Aorta (tissue), 5 donors: ENCODE measurements at regions of chr3 and their contacts with region 1.

Region 1: GRCh38 chr3:94004301-94004910 is 24.0 kb downstream of the STX19 start:
- DNase-seq: no peak
- ATAC-seq: peak; percentile 82
- H3K4me3 ChIP-seq: peak overlapping the region in 1 of 2 donors; percentile 48
- H3K27ac ChIP-seq: no peak overlapping the region
- H3K4me1 ChIP-seq: peaks cover 0 to 2% of the 10 kb centered on the region in 2 donors
- H3K27me3 ChIP-seq: no peaks in the 10 kb centered on the region

Region 2: DNA sequence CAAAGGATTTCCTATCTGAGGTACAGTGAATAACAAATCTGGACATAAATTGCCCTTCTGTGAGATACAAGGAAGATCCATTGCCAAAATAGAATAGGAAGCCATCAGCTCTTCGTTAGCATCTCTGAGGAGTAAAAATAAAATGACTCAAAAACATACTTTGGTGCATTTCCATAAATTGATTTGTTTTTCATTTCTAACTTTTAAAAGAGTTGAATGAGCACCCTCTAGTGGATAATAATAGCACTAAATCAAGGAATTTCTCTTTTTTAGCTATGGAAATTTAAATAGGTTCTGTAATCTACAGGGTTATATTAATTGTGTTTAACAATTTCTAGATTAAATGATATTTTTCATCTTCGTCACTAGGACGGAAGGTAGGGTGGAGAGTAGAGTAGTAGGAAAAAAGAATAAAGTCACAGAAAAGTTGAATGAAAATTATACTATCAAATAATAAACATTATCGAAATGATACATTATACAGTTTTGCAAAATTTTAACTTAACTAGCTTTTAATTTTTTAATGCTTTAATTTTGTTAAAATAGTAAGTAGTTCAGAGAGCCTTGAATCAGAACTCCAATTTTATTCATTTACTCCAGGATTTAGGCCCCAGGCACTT is 64.9 kb after region 1 on chr3:
- intact Hi-C with region 1: loop called (anchors 5 kb)
- DNase-seq: no peak
- ATAC-seq: peak; percentile 62
- H3K4me3 ChIP-seq: no peak overlapping the region
- H3K27ac ChIP-seq: no peak overlapping the region
- H3K4me1 ChIP-seq: peaks cover 0 to 3% of the 10 kb centered on the region in 2 donors
- H3K27me3 ChIP-seq: no peaks in the 10 kb centered on the region